GM23248 (cell line): ENCODE measurements at regions of chr11 and their contacts with region 1.

Region 1: GRCh38 chr11:130434521-130435223 is 6.3 kb upstream of the ADAMTS8 start:
- DNase-seq: peak; percentile 91
- H3K4me3 ChIP-seq: peak overlapping the region; percentile 80
- H3K27ac ChIP-seq: peak overlapping the region; percentile 56
- H3K4me1 ChIP-seq: peaks cover 18% of the 10 kb centered on the region
- H3K27me3 ChIP-seq: peaks cover 7% of the 10 kb centered on the region; the same call in 1 of the 2 replicates

Region 2: DNA sequence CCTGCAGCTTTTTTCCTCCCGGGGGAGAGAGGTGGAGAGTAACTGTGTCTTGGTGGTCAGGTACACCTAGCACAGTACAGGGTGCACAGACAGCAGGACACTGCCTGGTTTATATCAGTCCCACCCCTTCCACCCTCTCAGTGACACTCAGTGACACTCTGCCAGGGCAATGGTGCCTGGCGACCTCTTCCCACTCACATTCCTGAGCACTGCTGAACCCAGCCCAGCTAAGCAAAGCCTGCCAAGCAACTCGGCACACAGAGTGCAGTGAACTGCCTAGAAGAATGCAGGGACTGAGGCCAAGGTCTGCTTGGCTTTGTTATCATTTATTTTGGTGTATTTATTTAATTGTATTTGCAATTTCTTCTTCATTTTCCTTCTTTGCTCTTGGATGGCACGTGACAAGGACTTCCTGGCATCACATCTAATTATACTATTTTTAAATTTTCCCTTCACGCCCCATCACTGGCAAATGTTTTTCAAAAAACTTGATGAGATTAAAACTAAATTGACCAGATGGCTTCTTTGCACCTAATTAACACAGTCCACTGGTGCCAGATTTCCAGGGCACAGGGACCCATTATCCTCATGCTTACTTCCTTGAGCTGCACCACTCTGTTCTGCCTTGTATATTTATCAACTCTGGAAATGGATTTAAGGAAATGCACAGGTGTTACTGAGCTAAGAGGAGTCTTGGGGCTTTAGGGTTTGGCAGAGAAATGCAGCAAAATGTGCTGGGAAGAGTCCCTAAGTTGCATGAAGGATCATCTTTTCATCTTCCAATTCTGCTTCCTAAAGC is 219.4 kb after region 1 on chr11:
- in situ Hi-C with region 1: loop called (anchors 10 kb)
- DNase-seq: peak; percentile 72
- H3K4me3 ChIP-seq: no peak overlapping the region
- H3K27ac ChIP-seq: peak overlapping the region; percentile 81
- H3K4me1 ChIP-seq: peaks cover 21% of the 10 kb centered on the region
- H3K27me3 ChIP-seq: no peaks in the 10 kb centered on the region

Region 3: DNA sequence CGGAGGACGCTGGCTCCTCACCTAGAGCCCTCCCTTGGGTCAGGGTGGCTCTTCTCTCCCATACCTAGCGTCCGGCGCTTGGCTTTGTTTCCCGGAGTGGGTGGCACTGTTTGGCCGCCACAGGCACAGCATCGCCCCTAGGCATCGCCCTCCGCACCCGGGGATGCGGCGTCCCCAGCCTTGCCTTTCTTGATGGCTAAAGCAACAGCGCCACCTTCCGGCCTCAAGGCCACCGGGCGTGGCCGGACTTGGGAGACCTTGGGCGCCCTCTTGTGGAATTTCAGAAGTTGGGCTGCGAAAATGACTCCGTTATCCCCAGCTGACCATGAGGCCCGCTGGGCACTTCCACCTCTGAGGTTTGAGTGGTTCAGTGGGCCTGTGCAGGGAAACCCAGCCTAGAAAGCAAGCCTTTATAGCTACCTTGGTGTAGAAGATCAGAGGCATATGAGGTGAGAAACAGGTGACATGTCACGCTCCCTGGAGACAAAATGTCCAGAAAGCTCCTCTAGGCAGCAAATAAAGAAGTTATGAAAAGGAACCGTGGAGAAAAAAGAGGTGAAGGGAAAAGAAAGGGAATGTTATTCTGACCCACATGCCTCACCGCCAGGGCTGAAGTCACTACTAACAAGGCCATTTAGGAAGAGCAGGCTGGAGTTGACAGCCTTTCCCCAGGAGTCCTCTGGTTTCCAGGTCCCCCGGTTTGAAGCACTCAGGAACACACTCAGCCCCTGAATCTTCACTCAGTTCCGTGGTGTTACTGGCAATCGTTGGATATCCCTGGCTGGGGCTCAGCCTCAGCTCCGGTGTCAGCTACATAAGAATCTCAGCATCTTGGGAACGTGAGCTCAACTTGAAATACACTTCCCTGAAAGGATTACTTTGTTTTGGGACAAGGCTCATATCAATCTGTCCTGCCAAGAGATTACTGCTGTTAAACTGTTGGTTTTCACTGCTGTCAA is 427.5 kb after region 1 on chr11:
- in situ Hi-C with region 1: loop called (anchors 5 kb)
- DNase-seq: peak; percentile 91
- H3K4me3 ChIP-seq: no peak overlapping the region
- H3K27ac ChIP-seq: no peak overlapping the region
- H3K4me1 ChIP-seq: no peaks in the 10 kb centered on the region
- H3K27me3 ChIP-seq: no peaks in the 10 kb centered on the region